Endothelial cell of umbilical vein (primary cell): ENCODE measurements at regions of chr20 and their contacts with region 1.

Region 1: GRCh38 chr20:956330-956951 is 40.3 kb upstream of the ANGPT4 start:
- DNase-seq: peak; percentile 62
- H3K4me3 ChIP-seq: no peak overlapping the region
- H3K27ac ChIP-seq: no peak overlapping the region
- H3K4me1 ChIP-seq: no peaks in the 10 kb centered on the region
- H3K27me3 ChIP-seq: no peaks in the 10 kb centered on the region
- CTCF ChIP-seq: peak; percentile 93 to 96
- POLR2A ChIP-seq: no peak

Region 2: GRCh38 chr20:805713-806112 is 150.7 kb before region 1 on chr20:
- CTCF ChIA-PET with region 1: interaction called, 10 read pairs
- POLR2A ChIA-PET with region 1: no interaction called
- dilution Hi-C with region 1: no loop called
- intact Hi-C with region 1: no loop called
- DNase-seq: no peak
- H3K4me3 ChIP-seq: no peak overlapping the region
- H3K27ac ChIP-seq: no peak overlapping the region
- H3K4me1 ChIP-seq: no peaks in the 10 kb centered on the region
- H3K27me3 ChIP-seq: peaks cover 0 to 2% of the 10 kb centered on the region in 2 experiments
- CTCF ChIP-seq: no peak
- POLR2A ChIP-seq: no peak

Region 3: DNA sequence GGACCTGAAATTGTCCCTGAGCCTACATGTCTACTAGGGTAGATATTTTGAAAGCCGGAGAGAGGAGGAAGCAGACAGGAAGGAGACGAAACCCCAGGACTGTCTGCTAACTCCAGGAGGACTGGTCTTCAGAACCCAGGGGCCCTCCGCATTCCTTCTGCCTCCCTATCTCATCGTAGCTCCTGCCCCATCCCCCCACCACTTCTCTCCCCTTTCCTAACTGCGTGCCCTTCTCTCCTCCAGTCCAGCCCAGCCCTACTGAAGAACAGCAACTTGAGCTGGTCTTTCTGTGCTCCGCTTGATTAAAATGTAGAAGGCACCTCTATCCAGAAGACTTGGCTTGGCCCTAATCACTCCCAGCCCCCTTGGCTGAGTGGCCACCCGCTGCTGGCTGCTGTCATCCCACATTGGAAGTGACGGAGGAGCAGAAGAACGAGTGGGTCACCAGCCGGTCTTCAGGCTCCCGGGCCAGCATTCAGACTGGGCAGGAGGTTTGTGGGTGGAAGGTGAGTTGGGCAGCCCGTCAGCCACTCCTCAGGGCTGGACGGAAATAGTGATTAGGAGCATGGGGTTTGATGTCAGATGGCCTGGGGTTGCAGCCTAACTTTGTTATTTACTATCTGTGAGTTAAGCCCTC is 11.5 kb before region 1 on chr20:
- CTCF ChIA-PET with region 1: interaction called, 10 read pairs
- POLR2A ChIA-PET with region 1: no interaction called
- dilution Hi-C with region 1: no loop called
- intact Hi-C with region 1: no loop called
- DNase-seq: no peak
- H3K4me3 ChIP-seq: no peak overlapping the region
- H3K27ac ChIP-seq: no peak overlapping the region
- H3K4me1 ChIP-seq: no peaks in the 10 kb centered on the region
- H3K27me3 ChIP-seq: peaks cover 0 to 5% of the 10 kb centered on the region in 2 experiments
- CTCF ChIP-seq: no peak
- POLR2A ChIP-seq: no peak

Region 4: GRCh38 chr20:982754-983153 is 26.3 kb after region 1 on chr20:
- CTCF ChIA-PET with region 1: no interaction called
- POLR2A ChIA-PET with region 1: no interaction called
- dilution Hi-C with region 1: no loop called
- intact Hi-C with region 1: no loop called
- DNase-seq: no peak
- H3K4me3 ChIP-seq: no peak overlapping the region
- H3K27ac ChIP-seq: no peak overlapping the region
- H3K4me1 ChIP-seq: no peaks in the 10 kb centered on the region
- H3K27me3 ChIP-seq: no peaks in the 10 kb centered on the region
- CTCF ChIP-seq: no peak
- POLR2A ChIP-seq: no peak

Region 5: GRCh38 chr20:1108437-1108920 is 152.0 kb after region 1 on chr20:
- CTCF ChIA-PET with region 1: interaction called, 12 read pairs
- POLR2A ChIA-PET with region 1: no interaction called
- dilution Hi-C with region 1: no loop called
- intact Hi-C with region 1: no loop called
- DNase-seq: peak; percentile 35
- H3K4me3 ChIP-seq: no peak overlapping the region
- H3K27ac ChIP-seq: no peak overlapping the region
- H3K4me1 ChIP-seq: no peaks in the 10 kb centered on the region
- H3K27me3 ChIP-seq: peaks cover 9 to 11% of the 10 kb centered on the region in 2 experiments
- CTCF ChIP-seq: peak; percentile 71 to 90
- POLR2A ChIP-seq: no peak

Region 6: DNA sequence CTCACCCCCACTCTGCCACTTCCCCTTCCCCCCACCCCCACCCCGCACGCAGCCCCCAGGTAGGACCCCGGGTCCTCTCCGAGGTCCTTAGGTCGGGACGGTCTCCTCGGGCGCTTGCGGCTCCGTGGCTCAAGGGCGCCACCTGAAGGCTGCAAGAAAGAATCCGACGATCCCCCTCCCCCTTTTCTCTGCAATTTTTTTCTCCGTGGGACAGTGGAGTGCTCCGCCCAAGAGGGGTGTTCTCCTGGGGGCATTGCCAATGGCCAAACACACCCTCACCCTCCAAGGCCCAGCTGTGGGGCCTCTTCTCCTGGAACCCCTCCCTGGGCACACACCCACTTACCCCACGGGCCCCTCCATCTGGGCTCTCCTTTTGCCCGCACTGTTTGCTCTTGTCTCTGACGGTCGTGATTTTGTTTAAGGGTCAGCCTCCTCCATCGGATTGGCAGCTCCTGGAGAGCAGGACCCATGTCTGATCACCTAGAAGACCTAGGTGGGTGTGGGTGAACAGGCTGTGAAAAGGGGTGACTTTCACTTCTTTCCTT is 229.4 kb after region 1 on chr20:
- CTCF ChIA-PET with region 1: interaction called, 5 read pairs
- POLR2A ChIA-PET with region 1: no interaction called
- dilution Hi-C with region 1: no loop called
- intact Hi-C with region 1: loop called (anchors 10 kb)
- DNase-seq: peak; percentile 48
- H3K4me3 ChIP-seq: peak overlapping the region in 1 of 3 experiments; percentile 45
- H3K27ac ChIP-seq: no peak overlapping the region
- H3K4me1 ChIP-seq: no peaks in the 10 kb centered on the region
- H3K27me3 ChIP-seq: peaks cover 14 to 31% of the 10 kb centered on the region in 2 experiments
- CTCF ChIP-seq: peak; percentile 50 to 78
- POLR2A ChIP-seq: no peak

Region 7: GRCh38 chr20:1212607-1213396 is 256.4 kb after region 1 on chr20:
- CTCF ChIA-PET with region 1: interaction called, 7 read pairs
- POLR2A ChIA-PET with region 1: no interaction called
- dilution Hi-C with region 1: no loop called
- intact Hi-C with region 1: loop called (anchors 10 kb)
- DNase-seq: peak; percentile 63
- H3K4me3 ChIP-seq: no peak overlapping the region
- H3K27ac ChIP-seq: no peak overlapping the region
- H3K4me1 ChIP-seq: no peaks in the 10 kb centered on the region
- H3K27me3 ChIP-seq: peaks cover 8 to 39% of the 10 kb centered on the region in 2 experiments
- CTCF ChIP-seq: peak; percentile 81 to 91
- POLR2A ChIP-seq: no peak